ENCODE measurements at regions of chr6 and their contacts with region 1.

Region 1: GRCh38 chr6:27518881-27519795 is 46.2 kb upstream of the ZNF184 start:
- DNase-seq: peak; percentile 65 to 91
- H3K4me3 ChIP-seq: peak overlapping the region; percentile 82
- CTCF ChIP-seq: no peak
- POLR2A ChIP-seq: no peak

Region 2: GRCh38 chr6:26581164-26581915 is 937.8 kb before region 1 on chr6:
- intact Hi-C with region 1: loop called (anchors 5 kb)
- DNase-seq: no peak
- H3K4me3 ChIP-seq: no peak overlapping the region
- CTCF ChIP-seq: no peak
- POLR2A ChIP-seq: no peak

Region 3: GRCh38 chr6:27213544-27214125 is 305.5 kb before region 1 on chr6:
- intact Hi-C with region 1: no loop called
- DNase-seq: no peak
- H3K4me3 ChIP-seq: no peak overlapping the region
- CTCF ChIP-seq: no peak
- POLR2A ChIP-seq: no peak